CD14-positive monocyte (primary cell): ENCODE measurements at regions of chr3 and their contacts with region 1.

Region 1: GRCh38 chr3:52742418-52743041 is 28.2 kb downstream of the NEK4 start:
- DNase-seq: peak; percentile 18 to 46 (median 45)
- H3K4me3 ChIP-seq: no peak overlapping the region
- H3K4me3 Mint-ChIP-seq: no peak overlapping the region
- H3K27ac ChIP-seq: no peak overlapping the region
- H3K27ac Mint-ChIP-seq: peak overlapping the region in 1 of 7 donors; percentile 3
- H3K4me1 ChIP-seq: no peaks in the 10 kb centered on the region
- H3K4me1 Mint-ChIP-seq: no peaks in the 10 kb centered on the region
- H3K27me3 ChIP-seq: no peaks in the 10 kb centered on the region
- H3K27me3 Mint-ChIP-seq: peaks cover 0 to 2% (median 1%) of the 10 kb centered on the region in 3 donors
- CTCF ChIP-seq: peak; percentile 87

Region 2: DNA sequence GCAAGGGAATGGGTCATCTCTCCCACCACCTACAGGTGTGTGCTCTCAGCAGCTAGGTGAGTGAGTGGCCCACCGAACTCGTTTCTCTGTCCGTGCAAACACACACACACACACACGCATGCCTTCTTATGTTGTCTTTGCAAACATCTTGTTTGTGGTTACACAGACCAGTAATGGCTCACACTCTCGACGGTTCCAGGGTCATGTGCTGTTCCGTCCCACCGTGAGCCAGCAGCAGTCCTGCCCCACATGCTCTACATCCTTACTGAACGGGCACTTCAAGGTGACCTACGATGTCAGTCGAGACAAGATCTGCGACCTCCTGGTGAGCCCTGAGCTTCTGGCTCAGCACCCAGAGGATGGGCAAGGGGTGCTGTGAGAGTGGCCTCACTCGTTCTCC is 39.2 kb after region 1 on chr3:
- intact Hi-C with region 1: loop called in 1 of 2 experiments (anchors 5 kb)
- DNase-seq: peak in 1 of 3 donors; percentile 30
- H3K4me3 ChIP-seq: no peak overlapping the region
- H3K4me3 Mint-ChIP-seq: no peak overlapping the region
- H3K27ac ChIP-seq: no peak overlapping the region
- H3K27ac Mint-ChIP-seq: no peak overlapping the region
- H3K4me1 ChIP-seq: peaks cover 31 to 44% of the 10 kb centered on the region in 2 donors
- H3K4me1 Mint-ChIP-seq: peaks cover 47% of the 10 kb centered on the region
- H3K27me3 ChIP-seq: no peaks in the 10 kb centered on the region
- H3K27me3 Mint-ChIP-seq: peaks cover 4 to 10% (median 6%) of the 10 kb centered on the region in 3 donors
- CTCF ChIP-seq: no peak

Region 3: DNA sequence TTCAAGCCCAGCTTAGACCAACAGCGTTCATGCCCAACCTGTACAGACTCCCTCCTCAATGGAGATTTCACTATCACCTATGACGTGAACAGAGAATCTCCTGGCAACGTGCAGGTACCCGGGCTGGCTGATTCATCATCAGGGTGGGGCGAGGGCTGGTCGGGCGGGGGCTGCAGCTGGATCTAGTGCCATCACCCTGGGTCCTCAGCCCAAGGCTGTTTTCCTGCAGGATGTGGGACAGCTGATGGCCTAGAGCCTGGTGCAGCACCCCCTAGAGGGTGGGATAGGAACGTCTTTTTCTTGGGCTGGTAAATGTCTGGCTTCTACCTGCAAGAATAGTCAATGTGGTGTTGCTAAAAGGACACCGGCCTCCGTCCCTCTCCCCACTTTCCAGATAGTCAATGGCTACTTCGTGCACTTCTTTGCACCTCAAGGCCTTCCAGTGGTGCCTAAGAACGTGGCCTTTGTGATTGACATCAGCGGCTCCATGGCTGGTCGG is 56.5 kb after region 1 on chr3:
- intact Hi-C with region 1: loop called (anchors 2 to 5 kb)
- DNase-seq: peak; percentile 15 to 37 (median 36)
- H3K4me3 ChIP-seq: no peak overlapping the region
- H3K4me3 Mint-ChIP-seq: no peak overlapping the region
- H3K27ac ChIP-seq: no peak overlapping the region
- H3K27ac Mint-ChIP-seq: peak overlapping the region in 1 of 7 donors; percentile 30
- H3K4me1 ChIP-seq: no peaks in the 10 kb centered on the region
- H3K4me1 Mint-ChIP-seq: peaks cover 3% of the 10 kb centered on the region
- H3K27me3 ChIP-seq: no peaks in the 10 kb centered on the region
- H3K27me3 Mint-ChIP-seq: peaks cover under 1 to 4% (median 4%) of the 10 kb centered on the region in 3 donors
- CTCF ChIP-seq: peak; percentile 91

Region 4: GRCh38 chr3:52820736-52821135 is 78.2 kb after region 1 on chr3:
- intact Hi-C with region 1: loop called in 1 of 2 experiments (anchors 5 kb)
- DNase-seq: peak in 2 of 3 donors; percentile 5 to 15
- H3K4me3 ChIP-seq: no peak overlapping the region
- H3K4me3 Mint-ChIP-seq: no peak overlapping the region
- H3K27ac ChIP-seq: no peak overlapping the region
- H3K27ac Mint-ChIP-seq: peak overlapping the region in 3 of 7 donors; percentile 29 to 69 (median 37)
- H3K4me1 ChIP-seq: no peaks in the 10 kb centered on the region
- H3K4me1 Mint-ChIP-seq: no peaks in the 10 kb centered on the region
- H3K27me3 ChIP-seq: no peaks in the 10 kb centered on the region
- H3K27me3 Mint-ChIP-seq: peaks cover 0 to 2% (median 1%) of the 10 kb centered on the region in 3 donors
- CTCF ChIP-seq: peak; percentile 66